Tibial artery (tissue), 4 donors: ENCODE measurements at regions of chr19 and their contacts with region 1.

Region 1: DNA sequence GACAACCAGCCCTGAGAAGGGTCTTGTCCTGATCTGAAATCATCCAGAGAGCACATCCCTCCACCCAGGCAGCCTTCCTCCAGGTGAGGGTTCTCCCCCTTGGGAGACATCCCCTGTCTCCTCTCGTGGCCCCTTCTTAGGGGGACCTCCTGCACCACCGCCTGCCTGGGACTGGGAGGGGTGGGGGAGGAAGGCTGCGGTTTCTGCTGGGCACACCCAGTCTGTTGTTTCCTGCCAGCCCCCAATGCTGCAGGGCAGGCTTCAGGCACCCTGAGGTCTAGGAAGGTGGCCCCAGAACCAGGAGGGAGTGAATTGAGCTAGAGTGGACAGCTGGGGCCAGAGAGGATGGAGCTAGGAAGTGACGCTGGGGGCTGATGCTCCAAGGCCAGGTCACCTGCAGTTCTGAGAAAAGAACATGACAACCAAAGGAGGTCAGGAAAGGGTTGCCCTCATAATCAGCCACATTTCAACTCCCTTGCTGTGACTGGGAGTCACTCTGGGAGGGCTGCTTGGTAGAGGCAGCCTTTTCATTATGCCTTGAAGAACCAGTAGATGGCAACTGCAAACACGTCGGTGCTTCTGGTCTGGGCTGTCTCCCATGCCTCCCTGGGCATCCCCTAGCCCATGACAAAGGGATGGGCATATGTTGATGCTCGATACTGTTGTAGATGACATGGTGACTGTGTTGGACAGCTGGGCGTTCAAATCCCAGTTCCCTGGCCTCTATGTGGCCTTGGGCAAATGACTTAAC is 1.4 kb downstream of the ARHGEF18 start:
- DNase-seq: peak in 1 of 2 donors; percentile 43
- H3K4me3 ChIP-seq: no peak overlapping the region
- H3K27ac ChIP-seq: no peak overlapping the region
- H3K4me1 ChIP-seq: no peaks in the 10 kb centered on the region
- H3K27me3 ChIP-seq: peaks cover 0 to 2% of the 10 kb centered on the region in 2 donors
- CTCF ChIP-seq: no peak

Region 2: DNA sequence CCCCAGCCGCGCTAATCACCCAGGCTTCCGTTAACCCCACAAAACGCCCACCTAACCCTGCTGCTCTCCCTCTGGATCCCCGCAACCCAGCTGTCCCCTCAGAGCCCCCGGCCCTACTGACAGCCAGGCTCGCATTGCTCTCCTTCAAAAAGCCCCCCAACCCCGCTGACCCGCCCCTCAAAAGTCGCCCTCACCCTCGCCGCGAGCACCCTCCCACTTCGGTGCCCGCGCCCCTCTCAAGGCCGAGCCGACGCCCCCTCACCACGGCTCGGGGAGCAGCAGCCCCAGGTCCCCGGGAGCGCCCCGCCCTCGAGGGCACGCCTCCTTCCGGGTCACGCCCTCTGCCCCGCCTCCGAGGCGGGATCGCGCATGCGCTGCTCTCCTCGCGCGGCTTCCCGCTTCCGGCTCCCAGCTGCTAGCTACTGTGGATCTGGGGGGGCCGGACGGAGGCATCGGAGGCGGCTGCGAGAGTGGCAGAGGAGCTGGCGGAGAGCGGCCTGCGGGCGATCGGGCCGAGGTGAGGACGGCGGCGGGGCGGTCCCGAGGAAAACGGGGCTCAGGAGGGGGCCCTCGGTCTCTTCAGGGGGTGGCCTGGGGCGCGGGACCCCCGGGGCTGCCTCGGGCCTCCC is 44.7 kb after region 1 on chr19:
- intact Hi-C with region 1: no loop called
- DNase-seq: peak; percentile 84 to 93
- H3K4me3 ChIP-seq: peak overlapping the region; percentile 96 to 97
- H3K27ac ChIP-seq: peak overlapping the region; percentile 82 to 88
- H3K4me1 ChIP-seq: peaks cover 0 to 40% (median 22%) of the 10 kb centered on the region in 4 donors
- H3K27me3 ChIP-seq: no peaks in the 10 kb centered on the region
- CTCF ChIP-seq: no peak

Region 3: DNA sequence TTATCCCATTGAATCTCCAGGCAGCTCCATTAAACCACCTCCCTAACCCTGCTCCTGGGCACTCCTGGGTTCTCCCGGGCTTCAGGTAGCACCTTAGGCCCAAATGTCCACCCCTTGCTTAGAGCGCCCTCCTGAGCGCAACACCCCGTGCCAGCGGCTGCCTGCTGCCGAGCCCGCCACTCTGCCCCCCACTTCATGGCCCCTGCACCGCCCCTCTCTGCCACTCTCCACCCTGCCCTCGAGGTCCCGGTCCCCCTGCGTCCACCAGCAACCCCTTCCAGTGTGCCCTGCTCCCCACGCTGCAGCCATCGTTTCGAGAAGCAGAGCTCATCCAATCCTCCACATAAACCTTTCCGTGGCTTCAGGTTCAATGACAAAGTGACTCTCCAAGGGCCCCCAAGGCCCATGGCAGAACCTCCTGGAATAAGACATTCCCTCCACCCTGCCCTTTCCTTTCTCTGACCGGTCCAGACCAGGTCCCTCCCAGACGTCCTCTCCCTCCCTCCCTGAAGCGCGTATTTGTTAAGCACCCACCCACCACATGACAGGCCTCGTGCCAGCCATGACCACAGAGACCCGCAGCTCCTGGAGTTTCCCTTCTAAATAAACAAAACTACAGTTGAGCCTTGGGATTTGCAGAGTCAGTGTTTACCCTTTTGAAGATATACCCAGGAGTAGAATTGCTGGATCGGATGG is 65.2 kb after region 1 on chr19:
- intact Hi-C with region 1: no loop called
- DNase-seq: no peak
- H3K4me3 ChIP-seq: no peak overlapping the region
- H3K27ac ChIP-seq: no peak overlapping the region
- H3K4me1 ChIP-seq: peaks cover 0 to 5% (median 0%) of the 10 kb centered on the region in 4 donors
- H3K27me3 ChIP-seq: no peaks in the 10 kb centered on the region
- CTCF ChIP-seq: no peak

Region 4: DNA sequence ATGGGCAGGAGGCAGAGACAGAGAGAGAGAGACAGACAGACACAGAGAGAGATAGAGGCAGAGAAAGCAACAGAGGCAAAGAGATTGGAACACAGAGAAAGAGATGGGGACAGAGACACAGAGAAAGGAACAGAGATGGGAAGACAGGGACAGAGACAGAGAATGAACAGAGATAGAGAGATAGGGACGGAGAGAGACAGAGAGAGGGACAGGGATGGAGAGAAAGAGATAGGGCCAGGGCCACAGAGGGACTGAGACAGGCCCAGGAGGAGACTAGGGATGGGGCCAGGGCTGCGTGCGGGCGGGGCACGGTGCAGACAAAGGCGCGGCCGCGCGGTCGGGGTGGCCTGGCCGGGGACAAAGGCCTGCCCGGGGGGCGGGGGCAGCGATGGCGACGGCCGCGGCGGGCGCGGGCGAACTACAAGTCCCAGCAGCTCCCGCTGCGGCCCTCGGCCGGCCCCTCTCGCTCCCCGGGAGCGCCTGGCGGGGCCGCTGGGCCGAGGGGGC is 165.6 kb after region 1 on chr19 and contains the start of gene ZNF358:
- intact Hi-C with region 1: no loop called
- DNase-seq: peak; percentile 69 to 89
- H3K4me3 ChIP-seq: peak within 1 kb of the TSS; percentile 83 to 91
- H3K27ac ChIP-seq: peak within 1 kb of the TSS; percentile 99 to 100
- H3K4me1 ChIP-seq: peaks cover 0 to 38% (median 24%) of the 10 kb centered on the region in 4 donors
- H3K27me3 ChIP-seq: no peaks in the 10 kb centered on the region
- CTCF ChIP-seq: no peak

Region 5: GRCh38 chr19:7674010-7675005 is 324.2 kb after region 1 on chr19:
- intact Hi-C with region 1: loop called (anchors 10 kb)
- DNase-seq: peak; percentile 68 to 73
- H3K4me3 ChIP-seq: no peak overlapping the region
- H3K27ac ChIP-seq: no peak overlapping the region
- H3K4me1 ChIP-seq: peaks cover 0 to 6% (median 0%) of the 10 kb centered on the region in 4 donors
- H3K27me3 ChIP-seq: peaks cover 0 to 67% of the 10 kb centered on the region in 2 donors
- CTCF ChIP-seq: no peak